PC-3 (cell line): ENCODE measurements at regions of chr13 and their contacts with region 1.

Region 1: DNA sequence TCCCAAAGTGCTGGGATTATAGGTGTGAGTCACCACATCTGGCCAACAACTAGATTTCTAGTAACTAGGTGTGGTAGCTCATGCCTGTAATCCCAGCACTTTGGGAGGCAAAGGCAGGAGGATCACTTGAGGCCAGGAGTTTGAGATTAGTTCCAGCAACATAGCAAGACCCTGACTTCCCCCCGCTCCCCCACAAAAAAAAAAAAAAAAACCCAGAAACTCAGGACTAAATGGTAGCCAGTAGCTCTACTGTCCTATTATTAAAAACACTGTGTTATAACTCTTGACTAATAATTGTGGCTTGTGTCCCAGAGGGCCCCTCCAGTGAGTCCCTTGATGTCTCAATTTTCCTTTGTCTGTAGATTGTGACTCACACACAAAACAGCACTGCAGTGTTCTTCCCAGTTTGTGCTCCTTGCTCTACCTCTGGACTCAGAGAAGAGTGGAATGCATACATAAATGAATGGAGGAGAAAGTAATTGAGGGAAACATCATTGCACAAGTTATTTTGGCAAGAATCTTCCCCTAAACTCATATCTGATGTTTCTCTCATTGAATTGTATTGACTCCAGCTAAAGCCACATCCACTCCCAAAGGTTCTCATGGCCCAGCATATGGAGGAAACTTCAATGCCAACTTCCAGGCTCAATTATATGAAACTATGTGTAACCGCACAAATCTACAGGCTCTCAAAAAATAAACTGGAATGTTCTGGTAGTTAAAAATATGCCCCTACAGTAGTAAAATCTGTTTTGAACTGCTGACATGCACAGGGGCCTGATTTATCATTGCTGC is 8.8 kb downstream of the TPT1 start:
- DNase-seq: peak; percentile 76
- ATAC-seq: peak; percentile 58
- H3K4me3 ChIP-seq: no peak overlapping the region
- H3K27ac ChIP-seq: peak overlapping the region; percentile 71
- H3K4me1 ChIP-seq: peaks cover 58% of the 10 kb centered on the region
- H3K27me3 ChIP-seq: no peaks in the 10 kb centered on the region
- CTCF ChIP-seq: no peak

Region 2: DNA sequence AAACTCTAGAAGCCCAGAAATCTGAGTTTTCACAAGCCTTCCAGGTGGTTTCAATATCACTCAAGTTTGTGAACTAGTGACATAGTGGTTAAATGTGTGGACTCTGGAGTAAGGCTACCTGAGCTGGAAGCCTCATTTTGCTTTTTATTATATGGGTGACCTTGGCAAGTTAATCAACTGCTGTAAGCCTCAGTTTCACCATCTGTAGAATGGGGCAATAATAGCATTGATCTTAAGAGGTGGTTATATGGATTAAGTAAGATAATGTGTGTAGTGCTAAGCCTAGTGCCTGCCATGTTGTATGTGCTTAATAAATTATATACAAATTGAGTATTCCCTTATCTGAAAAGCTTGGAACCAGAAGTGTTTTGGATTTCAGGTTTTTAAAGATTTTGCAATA is 584.8 kb after region 1 on chr13:
- CTCF ChIA-PET with region 1: no interaction called
- POLR2A ChIA-PET with region 1: interaction called, 14 read pairs
- intact Hi-C with region 1: no loop called
- DNase-seq: no peak
- ATAC-seq: no peak
- H3K4me3 ChIP-seq: no peak overlapping the region
- H3K27ac ChIP-seq: no peak overlapping the region
- H3K4me1 ChIP-seq: no peaks in the 10 kb centered on the region
- H3K27me3 ChIP-seq: no peaks in the 10 kb centered on the region
- CTCF ChIP-seq: no peak